Brain microvascular endothelial cell (primary cell): ENCODE measurements at regions of chr3 and their contacts with region 1.

Region 1: DNA sequence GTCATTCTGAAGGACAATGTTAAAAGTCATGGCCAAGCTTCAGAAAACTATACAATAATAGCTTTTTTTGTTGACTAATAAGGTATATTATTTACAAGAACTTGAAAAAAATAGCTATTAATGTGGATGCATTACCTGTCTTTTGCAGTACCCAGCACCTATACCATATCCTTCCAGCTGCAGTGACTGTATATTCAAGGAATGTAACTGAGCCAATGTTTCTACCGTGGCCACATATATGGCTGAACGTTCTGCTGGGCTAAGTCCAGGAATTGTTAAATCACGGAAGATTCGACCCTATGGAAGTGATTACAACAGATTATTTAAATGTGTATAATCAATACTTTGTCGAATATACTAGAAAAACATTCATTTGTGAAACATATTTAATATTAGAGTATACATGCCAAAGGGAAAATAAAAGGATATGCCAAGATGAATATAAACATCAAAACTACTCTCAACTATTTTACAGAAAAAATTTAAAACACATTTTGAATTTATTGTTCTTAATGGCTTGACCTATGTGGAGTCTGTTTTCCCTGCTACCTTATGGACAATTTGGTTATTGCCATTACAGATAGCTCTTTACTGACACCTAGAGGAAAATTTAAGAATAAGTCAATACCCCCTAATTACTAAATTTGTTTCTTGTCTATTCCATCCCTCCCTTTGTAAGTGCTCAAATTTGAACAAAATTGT is 17.6 kb downstream of the ACAD11 start:
- DNase-seq: no peak
- H3K4me3 ChIP-seq: no peak overlapping the region
- H3K27ac ChIP-seq: no peak overlapping the region
- H3K27me3 ChIP-seq: no peaks in the 10 kb centered on the region
- CTCF ChIP-seq: peak; percentile 50

Region 2: GRCh38 chr3:132399054-132399929 is 242.7 kb before region 1 on chr3:
- in situ Hi-C with region 1: no loop called
- DNase-seq: peak; percentile 56
- H3K4me3 ChIP-seq: no peak overlapping the region
- H3K27ac ChIP-seq: no peak overlapping the region
- H3K27me3 ChIP-seq: no peaks in the 10 kb centered on the region
- CTCF ChIP-seq: peak; percentile 87

Region 3: GRCh38 chr3:132535575-132536441 is 106.2 kb before region 1 on chr3:
- in situ Hi-C with region 1: loop called (anchors 25 kb)
- DNase-seq: peak; percentile 86
- H3K4me3 ChIP-seq: no peak overlapping the region
- H3K27ac ChIP-seq: peak overlapping the region; percentile 62
- H3K27me3 ChIP-seq: no peaks in the 10 kb centered on the region
- CTCF ChIP-seq: peak; percentile 56

Region 4: DNA sequence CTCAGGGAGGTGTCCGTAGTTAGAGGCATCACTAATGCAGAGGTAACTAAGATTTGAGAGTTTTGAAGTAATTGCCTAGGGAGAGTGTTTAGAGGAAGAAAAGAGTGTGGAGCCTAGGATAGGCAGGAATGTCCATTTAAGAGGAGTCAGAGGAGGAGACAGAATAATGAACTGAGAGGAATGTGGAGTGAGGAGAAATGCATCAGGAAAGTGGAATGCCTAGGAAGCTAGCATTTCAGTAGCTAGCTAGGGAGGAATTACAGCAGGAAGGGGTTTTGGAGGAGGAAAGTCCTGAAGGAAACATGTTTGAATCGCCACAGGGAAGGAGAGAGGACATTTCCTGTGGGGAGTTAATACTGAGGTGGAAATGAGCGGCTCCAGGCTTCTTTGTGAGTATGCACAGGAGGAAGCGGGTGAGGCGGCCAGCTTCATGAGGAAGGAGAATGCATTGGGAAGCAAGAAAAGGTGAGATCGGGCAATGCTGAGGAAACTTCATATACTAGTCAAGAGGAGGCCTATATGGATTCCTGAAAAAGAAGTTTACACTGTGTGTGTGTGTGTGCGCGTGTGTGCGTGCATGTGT is 550.5 kb after region 1 on chr3:
- in situ Hi-C with region 1: no loop called
- DNase-seq: no peak
- H3K4me3 ChIP-seq: no peak overlapping the region
- H3K27ac ChIP-seq: no peak overlapping the region
- H3K27me3 ChIP-seq: no peaks in the 10 kb centered on the region
- CTCF ChIP-seq: no peak